Transverse colon (tissue), 4 donors: ENCODE measurements at regions of chr19 and their contacts with region 1.

Region 1: GRCh38 chr19:33430674-33431277 is 57.3 kb downstream of the CEBPG start:
- DNase-seq: peak; percentile 67
- H3K4me3 ChIP-seq: no peak overlapping the region
- H3K27ac ChIP-seq: no peak overlapping the region
- H3K4me1 ChIP-seq: no peaks in the 10 kb centered on the region
- H3K27me3 ChIP-seq: no peaks in the 10 kb centered on the region
- CTCF ChIP-seq: peak; percentile 62 to 77 (median 74)
- EP300 ChIP-seq: no peak
- POLR2A ChIP-seq: no peak

Region 2: GRCh38 chr19:33241530-33242101 is 189.2 kb before region 1 on chr19:
- in situ Hi-C with region 1: no loop called
- intact Hi-C with region 1: no loop called
- DNase-seq: peak; percentile 33
- H3K4me3 ChIP-seq: no peak overlapping the region
- H3K27ac ChIP-seq: no peak overlapping the region
- H3K4me1 ChIP-seq: peaks cover 2 to 11% (median 8%) of the 10 kb centered on the region in 4 donors
- H3K27me3 ChIP-seq: no peaks in the 10 kb centered on the region
- CTCF ChIP-seq: peak; percentile 69 to 85 (median 71)
- EP300 ChIP-seq: no peak
- POLR2A ChIP-seq: no peak

Region 3: DNA sequence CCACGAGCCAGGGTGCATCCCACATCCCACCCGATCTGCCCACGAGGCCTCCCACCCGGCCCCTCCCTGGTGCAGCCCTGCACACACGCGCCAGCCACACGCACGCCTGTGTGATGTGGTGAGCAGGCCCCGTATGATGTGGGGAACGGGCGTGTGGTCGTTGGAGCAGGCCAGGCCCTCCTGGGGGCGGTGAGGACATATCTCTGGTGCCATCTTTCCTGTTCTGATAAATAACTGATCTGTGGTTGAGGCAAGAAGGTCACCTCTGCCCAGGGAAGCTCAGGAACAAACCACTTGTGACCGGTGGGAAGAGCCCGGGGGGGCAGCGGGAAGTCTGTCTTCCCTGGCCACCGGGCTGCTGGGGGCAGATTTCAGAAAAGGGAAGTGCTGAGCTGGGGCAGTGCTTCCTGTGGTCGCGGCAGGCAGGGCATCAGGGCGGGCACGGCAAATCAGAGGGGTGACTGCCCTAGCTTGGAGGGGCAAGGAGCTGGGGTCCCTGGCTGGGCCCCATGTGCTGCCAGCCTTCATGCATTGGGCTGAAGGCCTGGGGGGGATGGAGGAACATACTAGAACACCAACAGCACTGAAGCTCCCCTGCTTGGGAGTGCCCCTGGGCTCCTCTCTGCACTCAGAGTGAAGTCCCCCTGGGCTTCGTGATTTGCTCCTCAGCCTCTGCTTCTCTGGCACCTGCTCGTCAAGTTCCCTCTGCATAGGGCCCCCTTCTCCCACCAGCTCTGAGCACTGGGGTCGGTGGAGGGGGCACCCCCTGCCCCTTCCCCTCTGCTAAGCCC is 170.0 kb before region 1 on chr19:
- in situ Hi-C with region 1: no loop called
- intact Hi-C with region 1: no loop called
- DNase-seq: no peak
- H3K4me3 ChIP-seq: no peak overlapping the region
- H3K27ac ChIP-seq: peak overlapping the region in 1 of 4 donors; percentile 9
- H3K4me1 ChIP-seq: no peaks in the 10 kb centered on the region
- H3K27me3 ChIP-seq: no peaks in the 10 kb centered on the region
- CTCF ChIP-seq: no peak
- EP300 ChIP-seq: no peak
- POLR2A ChIP-seq: no peak

Region 4: GRCh38 chr19:33406521-33407139 is 24.1 kb before region 1 on chr19:
- in situ Hi-C with region 1: no loop called
- intact Hi-C with region 1: no loop called
- DNase-seq: peak; percentile 82
- H3K4me3 ChIP-seq: no peak overlapping the region
- H3K27ac ChIP-seq: no peak overlapping the region
- H3K4me1 ChIP-seq: peaks cover 0 to 10% (median 4%) of the 10 kb centered on the region in 4 donors
- H3K27me3 ChIP-seq: no peaks in the 10 kb centered on the region
- CTCF ChIP-seq: peak; percentile 93 to 97 (median 96)
- EP300 ChIP-seq: no peak
- POLR2A ChIP-seq: no peak

Region 5: DNA sequence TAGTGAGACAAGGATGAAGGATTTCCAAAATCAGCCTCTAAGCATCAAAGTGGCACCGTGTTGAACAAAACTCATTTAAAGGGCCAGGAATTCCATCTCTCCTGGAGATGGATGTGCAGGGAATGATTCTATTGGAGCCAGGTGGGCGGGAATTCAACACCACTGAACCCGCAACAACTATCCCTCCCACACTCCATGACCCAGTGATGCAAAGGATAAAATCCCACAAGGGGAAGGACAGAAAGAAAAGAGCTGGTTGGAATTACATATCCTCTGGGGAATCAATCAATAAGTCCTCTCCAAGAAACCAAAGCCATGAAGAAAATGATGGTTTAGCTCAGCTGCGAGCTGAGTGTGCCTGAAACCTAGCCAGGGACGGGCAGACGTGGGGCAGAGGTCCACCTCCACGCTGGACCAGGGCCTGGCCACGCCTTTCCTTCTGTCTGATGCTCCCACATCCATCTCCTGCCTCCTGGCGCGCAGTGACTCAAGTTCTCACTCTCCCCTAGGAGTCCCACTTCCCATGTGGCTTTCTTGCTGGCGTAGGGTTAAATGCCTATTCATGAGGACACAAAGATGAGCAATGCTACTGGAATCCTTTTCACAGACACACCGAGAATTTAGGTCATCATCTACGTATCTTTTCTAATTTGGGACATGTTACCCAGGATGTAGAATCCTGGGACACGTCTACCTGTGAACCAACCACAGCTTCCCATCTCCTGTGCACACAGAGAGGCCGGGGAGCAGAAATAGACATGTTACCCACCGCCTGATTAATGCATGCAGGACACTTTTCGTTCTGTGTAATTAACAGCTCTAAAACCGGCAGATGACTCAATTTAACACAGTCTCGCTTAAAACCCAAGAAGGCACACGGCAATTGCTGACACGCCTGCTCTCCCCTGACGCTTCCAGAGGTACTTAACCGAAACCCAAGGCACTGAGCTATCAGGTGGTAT is 42.2 kb after region 1 on chr19:
- in situ Hi-C with region 1: no loop called
- intact Hi-C with region 1: loop called (anchors 1 kb)
- DNase-seq: no peak
- H3K4me3 ChIP-seq: no peak overlapping the region
- H3K27ac ChIP-seq: no peak overlapping the region
- H3K4me1 ChIP-seq: peaks cover 0 to 3% (median 0%) of the 10 kb centered on the region in 4 donors
- H3K27me3 ChIP-seq: no peaks in the 10 kb centered on the region
- CTCF ChIP-seq: no peak
- EP300 ChIP-seq: no peak
- POLR2A ChIP-seq: no peak

Region 6: DNA sequence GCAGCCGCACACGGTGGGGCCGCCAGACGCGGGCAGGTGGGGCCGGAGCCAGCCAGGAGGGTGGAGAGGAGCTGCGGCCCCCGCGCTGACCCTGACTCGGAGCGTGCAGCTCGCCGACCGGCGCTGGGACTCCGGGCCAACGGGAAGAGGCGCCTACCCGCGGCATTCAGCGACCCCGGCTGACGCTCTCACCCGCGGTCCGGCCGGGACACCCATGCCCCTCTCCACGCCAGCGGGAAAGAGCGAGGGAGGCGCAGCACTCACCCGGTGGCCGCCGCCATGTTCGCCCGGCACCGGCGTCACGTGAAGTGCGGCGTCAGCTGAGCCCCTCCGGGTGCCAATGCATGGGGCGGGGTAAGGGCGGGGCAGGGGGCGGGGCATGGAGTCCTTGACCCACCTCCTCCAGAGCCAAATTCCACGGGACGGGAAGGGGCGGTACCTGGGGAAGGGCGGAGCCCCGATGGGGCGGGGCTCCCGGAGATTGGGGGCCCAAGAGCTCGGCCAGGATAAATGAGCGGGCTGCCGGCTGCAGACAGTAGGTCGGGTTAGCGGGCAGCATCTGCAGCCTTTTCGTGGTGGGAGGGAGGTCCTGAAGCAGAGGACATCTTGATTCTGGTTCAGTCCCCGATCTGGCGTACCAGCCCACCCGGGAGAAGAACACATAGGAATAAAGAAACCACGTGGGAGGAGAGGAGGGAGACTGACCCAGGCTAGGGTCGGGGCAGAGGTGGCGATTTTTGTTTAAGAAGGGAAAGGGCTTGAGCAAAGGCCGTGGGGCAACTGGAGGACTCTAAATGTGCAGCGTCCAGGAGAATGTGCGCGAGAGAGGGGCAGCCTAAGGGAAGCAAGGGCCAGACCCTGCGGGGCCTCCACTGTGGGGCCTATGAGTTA is 90.9 kb after region 1 on chr19 and contains the start of gene PEPD:
- in situ Hi-C with region 1: no loop called
- intact Hi-C with region 1: no loop called
- DNase-seq: peak; percentile 90
- H3K4me3 ChIP-seq: peak within 1 kb of the TSS; percentile 70 to 99 (median 81)
- H3K27ac ChIP-seq: peak within 1 kb of the TSS; percentile 24 to 76 (median 70)
- H3K4me1 ChIP-seq: peaks cover 11 to 19% (median 13%) of the 10 kb centered on the region in 4 donors
- H3K27me3 ChIP-seq: no peaks in the 10 kb centered on the region
- CTCF ChIP-seq: no peak
- EP300 ChIP-seq: no peak
- POLR2A ChIP-seq: peak; percentile 68
- total RNA-seq, gene PEPD: 92.6 to 323 (median 218) TPM

Region 7: DNA sequence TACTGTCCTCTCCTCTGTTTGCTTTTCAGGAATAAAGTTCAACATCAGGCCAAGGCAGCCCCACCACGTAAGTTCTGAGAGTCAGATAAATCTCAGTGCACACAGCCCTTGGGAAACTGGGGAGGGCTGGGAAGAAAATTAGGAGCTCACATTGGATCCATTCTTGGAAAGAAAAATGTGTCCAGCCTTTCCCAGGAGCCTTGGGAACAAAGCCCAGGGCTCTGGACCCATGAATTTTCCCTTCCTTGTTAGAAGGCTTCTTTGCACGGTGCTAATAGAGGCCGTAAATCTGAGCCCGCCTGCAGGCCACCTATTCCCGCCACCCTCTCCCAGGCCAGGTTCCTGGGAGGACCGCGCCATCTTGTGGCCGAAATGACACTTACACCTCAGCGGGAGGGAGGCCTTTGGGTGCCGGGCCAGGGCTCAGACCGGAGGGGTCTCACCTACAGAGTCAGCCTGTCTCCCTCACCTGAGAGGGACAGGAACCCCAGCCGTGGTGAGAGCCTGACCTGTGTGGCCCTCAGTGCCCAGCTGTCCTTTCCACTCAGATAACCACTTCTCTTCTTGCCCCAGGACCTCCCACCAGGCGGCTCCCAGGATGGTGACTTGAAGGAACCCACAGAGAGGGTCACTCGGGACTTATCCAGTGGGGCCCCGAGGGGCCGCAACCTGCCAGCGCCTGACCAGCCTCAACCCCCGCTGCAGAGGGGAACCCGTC is 340.8 kb after region 1 on chr19:
- in situ Hi-C with region 1: loop called (anchors 5 to 25 kb)
- intact Hi-C with region 1: loop called (anchors 5 kb)
- DNase-seq: peak; percentile 73
- H3K4me3 ChIP-seq: no peak overlapping the region
- H3K27ac ChIP-seq: no peak overlapping the region
- H3K4me1 ChIP-seq: no peaks in the 10 kb centered on the region
- H3K27me3 ChIP-seq: peaks cover 7% of the 10 kb centered on the region
- CTCF ChIP-seq: peak; percentile 82 to 88 (median 86)
- EP300 ChIP-seq: no peak
- POLR2A ChIP-seq: no peak

Region 8: GRCh38 chr19:34096020-34096915 is 665.5 kb after region 1 on chr19:
- in situ Hi-C with region 1: loop called in 2 of 4 experiments (anchors 25 kb)
- intact Hi-C with region 1: no loop called
- DNase-seq: no peak
- H3K4me3 ChIP-seq: no peak overlapping the region
- H3K27ac ChIP-seq: no peak overlapping the region
- H3K4me1 ChIP-seq: no peaks in the 10 kb centered on the region
- H3K27me3 ChIP-seq: peaks cover 12% of the 10 kb centered on the region
- CTCF ChIP-seq: peak; percentile 58 to 68 (median 63)
- EP300 ChIP-seq: no peak
- POLR2A ChIP-seq: no peak

Region 9: DNA sequence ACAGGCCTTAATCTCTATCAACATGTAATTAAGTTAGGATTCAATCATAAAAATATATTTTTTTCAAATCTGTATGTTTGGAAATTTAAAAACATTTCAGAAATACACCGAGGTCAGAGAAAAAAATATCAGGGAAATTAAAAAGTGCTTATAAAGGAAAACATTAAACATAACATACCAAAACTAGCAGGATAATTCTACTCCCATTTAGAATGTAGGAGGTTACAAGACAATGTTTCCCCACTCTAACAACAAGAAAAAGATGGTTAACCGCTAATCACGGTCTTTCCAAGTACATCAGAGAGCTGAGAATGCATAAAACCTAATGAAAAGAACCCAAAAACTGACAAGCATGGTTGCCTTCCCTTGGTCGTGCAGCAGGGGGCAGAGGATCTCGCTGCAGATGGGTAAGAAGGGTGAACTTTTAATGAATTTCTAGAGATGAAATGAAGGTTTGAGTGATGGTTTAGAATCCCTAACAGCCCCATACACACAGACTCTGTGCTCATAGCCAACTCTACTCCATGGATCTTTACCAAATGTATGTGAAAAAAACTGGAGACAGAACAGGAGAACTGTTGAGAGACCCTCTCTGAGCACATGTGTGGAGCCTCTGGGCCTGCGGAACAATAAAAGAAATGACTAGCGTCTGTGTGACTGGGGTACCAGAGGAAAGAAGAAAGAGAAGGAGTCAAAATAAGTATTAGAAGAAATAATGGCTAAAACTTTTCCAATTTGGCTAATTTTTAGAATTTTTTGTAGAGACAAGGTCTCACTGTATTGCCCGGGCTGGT is 690.3 kb after region 1 on chr19:
- in situ Hi-C with region 1: loop called in 1 of 4 experiments (anchors 25 kb)
- intact Hi-C with region 1: no loop called
- DNase-seq: no peak
- H3K4me3 ChIP-seq: no peak overlapping the region
- H3K27ac ChIP-seq: no peak overlapping the region
- H3K4me1 ChIP-seq: no peaks in the 10 kb centered on the region
- H3K27me3 ChIP-seq: peaks cover 27% of the 10 kb centered on the region
- CTCF ChIP-seq: peak; percentile 41 to 61 (median 49)
- EP300 ChIP-seq: no peak
- POLR2A ChIP-seq: no peak